ENCODE measurements at regions of chr1 and their contacts with region 1.

Region 1: GRCh38 chr1:147579532-147579931 is 38.2 kb downstream of the BCL9 start:
- DNase-seq: peak; percentile 73 to 84
- H3K4me3 ChIP-seq: no peak overlapping the region
- H3K4me3 Mint-ChIP-seq: peak overlapping the region; percentile 49
- H3K27ac Mint-ChIP-seq: peak overlapping the region; percentile 46
- H3K4me1 ChIP-seq: peaks cover 38% of the 10 kb centered on the region
- H3K4me1 Mint-ChIP-seq: peaks cover 23% of the 10 kb centered on the region
- H3K27me3 ChIP-seq: no peaks in the 10 kb centered on the region
- H3K27me3 Mint-ChIP-seq: no peaks in the 10 kb centered on the region
- CTCF ChIP-seq: no peak

Region 2: DNA sequence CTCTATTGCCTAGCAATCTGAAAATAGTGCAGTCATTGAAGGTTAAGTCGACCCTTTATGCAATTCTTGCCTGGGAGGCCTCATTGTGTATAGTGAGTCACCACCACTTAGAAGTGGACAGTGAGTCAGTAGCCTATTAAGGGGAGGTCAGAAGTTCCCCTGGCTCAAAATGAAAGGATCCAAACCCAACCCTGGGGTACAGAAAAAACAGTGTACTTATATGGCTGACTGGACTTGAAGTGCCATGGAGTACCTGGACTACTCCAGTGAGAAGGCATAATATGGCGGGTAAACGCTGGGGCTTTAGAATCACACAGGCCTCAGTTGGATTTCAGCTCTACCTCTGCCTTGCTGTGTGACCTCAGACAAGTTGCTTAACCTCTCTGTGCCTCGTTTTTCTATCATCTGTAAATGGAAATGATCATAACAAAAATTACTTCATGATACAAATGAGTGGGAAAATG is 40.4 kb before region 1 on chr1:
- CTCF ChIA-PET with region 1: no interaction called
- POLR2A ChIA-PET with region 1: no interaction called
- intact Hi-C with region 1: loop called (anchors 5 kb)
- DNase-seq: peak; percentile 18 to 42
- H3K4me3 ChIP-seq: no peak overlapping the region
- H3K4me3 Mint-ChIP-seq: no peak overlapping the region
- H3K27ac Mint-ChIP-seq: no peak overlapping the region
- H3K4me1 ChIP-seq: peaks cover 28% of the 10 kb centered on the region
- H3K4me1 Mint-ChIP-seq: peaks cover 7% of the 10 kb centered on the region
- H3K27me3 ChIP-seq: no peaks in the 10 kb centered on the region
- H3K27me3 Mint-ChIP-seq: no peaks in the 10 kb centered on the region
- CTCF ChIP-seq: no peak

Measured in Caco-2 (cell line).